ENCODE measurements at regions of chr1 and their contacts with region 1.

Region 1: GRCh38 chr1:115052454-115053083 is 22.9 kb downstream of the TSHB start:
- DNase-seq: peak in 32 of 35 experiments; percentile 18 to 75 (median 48)
- ATAC-seq: peak; percentile 75 to 86 (median 84)
- H3K4me3 ChIP-seq: no peak overlapping the region
- H3K4me3 Mint-ChIP-seq: no peak overlapping the region
- H3K27ac ChIP-seq: no peak overlapping the region
- H3K27ac Mint-ChIP-seq: no peak overlapping the region
- H3K4me1 ChIP-seq: peaks cover 0 to 4% of the 10 kb centered on the region in 2 experiments
- H3K4me1 Mint-ChIP-seq: peaks cover 0 to 7% (median 2%) of the 10 kb centered on the region in 3 donors
- H3K27me3 ChIP-seq: no peaks in the 10 kb centered on the region
- H3K27me3 Mint-ChIP-seq: no peaks in the 10 kb centered on the region

Region 2: DNA sequence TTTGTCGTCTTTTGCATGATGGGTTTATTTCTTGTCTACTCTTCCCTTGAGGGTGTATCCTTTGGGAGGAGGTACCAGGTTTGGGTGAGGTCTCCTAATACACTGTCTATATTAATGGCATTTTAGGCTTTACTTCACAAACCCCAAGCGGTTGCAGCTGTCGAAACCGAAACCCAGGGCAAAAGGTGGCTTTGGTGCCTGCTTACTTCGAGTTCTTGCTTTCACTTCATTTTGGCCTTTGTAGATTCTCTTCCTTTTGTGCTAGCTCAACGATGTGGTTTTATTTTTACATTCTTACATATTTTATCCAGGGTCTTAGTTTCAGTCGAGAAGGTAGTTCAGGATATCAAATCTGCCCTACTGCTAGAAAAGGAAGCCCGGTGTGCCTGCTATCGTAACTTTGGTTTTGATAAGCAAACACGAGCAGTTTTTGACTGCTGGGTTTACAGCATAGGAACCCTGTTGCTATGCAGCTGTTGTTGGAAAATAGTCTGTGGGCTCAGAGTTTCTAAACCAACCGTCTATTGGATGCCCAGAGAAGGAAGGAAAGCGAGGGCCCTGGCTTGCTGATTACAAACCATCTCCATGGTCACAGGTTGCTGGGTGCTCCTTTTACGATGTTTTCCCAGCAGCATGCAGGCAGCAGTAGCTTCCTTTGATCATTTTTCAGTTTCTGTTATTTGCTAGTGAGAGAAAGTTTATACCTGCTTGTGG is 46.6 kb after region 1 on chr1:
- CTCF ChIA-PET with region 1: interaction called, 5 to 13 read pairs
- POLR2A ChIA-PET with region 1: interaction called in 1 of 2 experiments, 3 read pairs
- DNase-seq: peak; percentile 19 to 93 (median 80)
- ATAC-seq: peak; percentile 84 to 93 (median 86)
- H3K4me3 ChIP-seq: peak overlapping the region; percentile 57 to 64
- H3K4me3 Mint-ChIP-seq: peak overlapping the region; percentile 83 to 95 (median 91)
- H3K27ac ChIP-seq: peak overlapping the region; percentile 99
- H3K27ac Mint-ChIP-seq: peak overlapping the region; percentile 99 to 100
- H3K4me1 ChIP-seq: peaks cover 18 to 22% of the 10 kb centered on the region in 2 experiments
- H3K4me1 Mint-ChIP-seq: peaks cover 50 to 63% (median 54%) of the 10 kb centered on the region in 3 donors
- H3K27me3 ChIP-seq: no peaks in the 10 kb centered on the region
- H3K27me3 Mint-ChIP-seq: no peaks in the 10 kb centered on the region

Region 3: DNA sequence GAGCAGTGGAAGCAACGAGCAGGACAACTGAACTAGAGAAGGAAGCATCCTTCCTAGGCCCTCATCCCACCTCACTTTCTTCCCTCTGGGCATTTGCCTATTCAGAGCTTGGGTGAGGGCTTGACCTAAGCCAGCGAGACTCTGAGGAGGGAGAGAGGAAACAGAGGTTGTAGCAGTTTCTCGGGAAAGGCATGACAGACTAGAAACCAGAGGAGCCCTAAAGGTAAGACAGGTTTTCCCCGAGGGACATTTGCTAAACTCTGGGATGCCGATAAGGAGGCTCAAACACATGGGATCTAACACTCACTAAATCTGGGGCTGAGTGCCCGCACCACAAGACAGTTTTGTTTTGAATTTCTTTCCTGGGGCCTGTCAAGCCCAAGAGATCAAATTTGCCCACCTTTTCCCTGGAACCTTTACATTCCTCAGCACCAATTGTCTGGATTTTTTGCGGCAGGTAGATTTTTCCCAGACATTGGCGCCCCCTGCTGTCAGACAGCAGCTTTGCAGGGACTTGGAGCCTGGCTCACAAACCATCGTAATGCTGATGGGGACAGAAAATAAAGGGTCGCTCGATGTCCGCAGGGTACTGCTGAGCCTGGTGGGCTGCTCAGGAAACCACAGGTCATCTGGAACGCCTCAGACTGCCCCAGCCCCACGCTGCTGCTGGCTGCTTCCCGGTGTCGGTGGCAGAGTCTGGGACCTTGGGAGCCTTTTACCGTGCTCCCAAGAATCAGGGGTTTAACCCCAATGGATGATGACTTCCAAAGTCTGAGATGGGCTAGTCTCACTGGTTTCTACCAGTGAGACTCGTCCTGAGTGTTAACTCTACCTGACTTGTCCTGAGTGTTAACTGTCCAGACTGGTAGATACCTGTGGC is 60.2 kb after region 1 on chr1:
- CTCF ChIA-PET with region 1: interaction called, 6 to 15 read pairs
- POLR2A ChIA-PET with region 1: no interaction called
- DNase-seq: peak in 30 of 35 experiments; percentile 14 to 68 (median 46)
- ATAC-seq: peak; percentile 46 to 55 (median 53)
- H3K4me3 ChIP-seq: no peak overlapping the region
- H3K4me3 Mint-ChIP-seq: no peak overlapping the region
- H3K27ac ChIP-seq: no peak overlapping the region
- H3K27ac Mint-ChIP-seq: no peak overlapping the region
- H3K4me1 ChIP-seq: peaks cover 3 to 9% of the 10 kb centered on the region in 2 experiments
- H3K4me1 Mint-ChIP-seq: peaks cover 12 to 19% (median 15%) of the 10 kb centered on the region in 3 donors
- H3K27me3 ChIP-seq: no peaks in the 10 kb centered on the region
- H3K27me3 Mint-ChIP-seq: peaks cover 0 to 1% of the 10 kb centered on the region in 2 donors